ENCODE measurements at regions of chr11 and their contacts with region 1.

Region 1: GRCh38 chr11:92224407-92225124 is at the start of gene FAT3:
- ATAC-seq: peak; percentile 47 to 84 (median 56)
- H3K4me3 ChIP-seq: peak within 1 kb of the TSS; percentile 54 to 91 (median 65)
- H3K27ac ChIP-seq: peak within 1 kb of the TSS; percentile 81 to 84
- H3K4me1 ChIP-seq: peaks cover 26 to 28% of the 10 kb centered on the region in 2 donors
- total RNA-seq, gene FAT3: 0.04 to 99.9 (median 36.4) TPM

Region 2: GRCh38 chr11:92852946-92853345 is 628.4 kb after region 1 on chr11:
- in situ Hi-C with region 1: loop called in 1 of 9 experiments (anchors 25 kb)
- ATAC-seq: peak in 1 of 8 experiments; percentile 19
- H3K4me3 ChIP-seq: no peak overlapping the region
- H3K27ac ChIP-seq: no peak overlapping the region
- H3K4me1 ChIP-seq: peaks cover 10 to 19% of the 10 kb centered on the region in 2 donors

Region 3: GRCh38 chr11:92886243-92886905 is 661.8 kb after region 1 on chr11:
- in situ Hi-C with region 1: loop called in 1 of 9 experiments (anchors 25 kb)
- ATAC-seq: peak; percentile 88 to 99 (median 98)
- H3K4me3 ChIP-seq: no peak overlapping the region
- H3K27ac ChIP-seq: no peak overlapping the region
- H3K4me1 ChIP-seq: peaks cover 7 to 14% of the 10 kb centered on the region in 2 donors